ENCODE measurements at regions of chr1 and their contacts with region 1.

Region 1: DNA sequence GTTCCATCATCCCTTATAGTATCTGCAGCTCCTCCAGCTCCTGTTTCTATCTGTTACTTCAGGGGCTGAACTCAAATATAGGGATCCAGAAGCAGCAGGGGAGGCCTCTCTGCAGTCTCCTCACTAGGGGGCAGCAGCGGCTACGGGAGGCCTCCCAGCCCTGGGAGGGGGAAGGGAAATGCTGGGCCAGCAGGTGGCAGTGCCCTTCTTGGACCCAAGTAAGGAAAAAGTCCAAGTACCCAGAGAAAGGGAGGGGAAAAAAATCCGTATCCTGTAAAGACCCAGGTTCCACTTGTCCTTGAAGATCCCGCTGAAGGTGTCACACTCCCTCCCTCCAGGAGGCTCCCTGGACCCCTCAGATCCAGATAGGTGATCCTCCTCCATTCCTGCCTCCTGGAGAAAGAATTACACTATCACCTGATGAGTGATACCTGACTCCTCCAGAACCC is 14.1 kb upstream of the NUAK2 start:
- DNase-seq: peak; percentile 84
- ATAC-seq: peak; percentile 82
- H3K4me3 Mint-ChIP-seq: no peak overlapping the region
- H3K27ac Mint-ChIP-seq: no peak overlapping the region
- H3K4me1 Mint-ChIP-seq: peaks cover 18% of the 10 kb centered on the region
- H3K27me3 Mint-ChIP-seq: peaks cover 46% of the 10 kb centered on the region

Region 2: DNA sequence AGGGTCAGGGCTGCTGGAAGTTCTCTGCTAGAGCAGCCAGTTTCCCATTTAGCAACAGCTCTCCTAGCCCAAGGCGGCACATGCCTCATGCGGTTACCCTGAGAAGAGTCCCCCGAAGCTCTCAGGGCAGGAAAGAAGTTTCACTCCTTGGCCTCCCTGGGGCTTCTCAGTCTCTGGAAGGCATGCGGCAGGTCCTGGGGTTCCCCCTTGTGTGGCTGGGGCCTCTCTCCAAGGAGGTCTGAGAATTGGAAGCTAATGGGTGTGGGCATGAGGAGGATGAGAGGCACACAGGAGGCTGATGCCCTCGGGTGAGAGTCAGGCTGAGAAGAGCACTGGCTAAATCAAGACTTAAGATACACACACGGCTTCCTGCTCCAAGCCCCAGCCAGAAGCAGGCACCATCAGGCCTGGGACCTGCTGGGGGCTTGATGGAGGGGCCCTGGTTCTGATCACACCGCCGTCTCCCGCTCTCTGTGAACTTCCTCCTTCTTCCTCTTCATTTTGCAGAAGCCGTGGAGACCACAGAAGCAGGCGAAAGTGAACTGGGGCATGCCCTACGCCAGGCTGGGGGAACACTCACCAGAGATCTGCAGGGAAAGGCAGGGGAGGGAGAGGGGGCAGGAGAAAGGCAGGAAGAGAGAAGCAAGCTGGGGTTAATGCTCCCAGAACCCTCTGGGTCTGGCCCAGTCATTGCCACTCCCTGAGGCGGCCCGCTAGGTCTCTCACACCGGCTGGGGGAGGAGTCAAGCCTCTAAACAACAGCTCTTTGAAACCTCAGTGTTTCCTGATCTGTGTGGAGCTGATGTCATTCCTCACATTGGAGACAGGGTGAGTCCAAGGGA is 105.0 kb after region 1 on chr1:
- CTCF ChIA-PET with region 1: interaction called, 11 read pairs
- DNase-seq: peak; percentile 90
- ATAC-seq: peak; percentile 97
- H3K4me3 Mint-ChIP-seq: peak overlapping the region; percentile 71
- H3K27ac Mint-ChIP-seq: peak overlapping the region; percentile 95
- H3K4me1 Mint-ChIP-seq: peaks cover 31% of the 10 kb centered on the region
- H3K27me3 Mint-ChIP-seq: peaks cover 7% of the 10 kb centered on the region

Measured in activated CD8-positive, alpha-beta memory T cell treated with anti-CD3 and anti-CD28 coated beads, Interleukin-2, amount 10 ng/mL, durations not matched to agents 7 days and 5 days (primary cell).